Heart right ventricle (tissue), 16 donors: ENCODE measurements at regions of chr11 and their contacts with region 1.

Region 1: DNA sequence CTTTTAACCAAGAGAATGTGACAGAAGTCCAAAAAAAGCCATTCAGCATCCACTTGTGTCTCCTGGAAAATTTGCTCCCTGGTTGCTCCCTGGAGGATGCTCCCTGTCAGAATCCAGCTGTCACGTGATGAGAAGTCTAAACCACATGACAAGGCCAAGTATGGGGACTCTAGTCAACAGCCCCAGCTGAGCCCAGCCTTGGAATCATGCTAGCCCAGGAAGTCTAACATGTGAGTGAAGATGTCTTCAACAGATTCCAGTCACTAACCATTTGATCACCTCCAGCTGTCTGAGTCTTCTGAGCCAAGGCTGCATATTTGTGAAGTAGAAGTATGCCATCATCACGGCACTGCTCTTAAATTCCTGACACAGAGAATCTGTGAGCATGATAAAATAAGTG is 4.2 kb downstream of the OR56B4 start:
- DNase-seq: peak in 1 of 2 donors; percentile 33
- ATAC-seq: peak in 2 of 8 donors; percentile 16 to 49
- H3K4me3 ChIP-seq: no peak overlapping the region
- H3K27ac ChIP-seq: no peak overlapping the region
- H3K4me1 ChIP-seq: peaks cover 0 to 4% (median 0%) of the 10 kb centered on the region in 9 donors
- H3K27me3 ChIP-seq: no peaks in the 10 kb centered on the region
- CTCF ChIP-seq: no peak

Region 2: DNA sequence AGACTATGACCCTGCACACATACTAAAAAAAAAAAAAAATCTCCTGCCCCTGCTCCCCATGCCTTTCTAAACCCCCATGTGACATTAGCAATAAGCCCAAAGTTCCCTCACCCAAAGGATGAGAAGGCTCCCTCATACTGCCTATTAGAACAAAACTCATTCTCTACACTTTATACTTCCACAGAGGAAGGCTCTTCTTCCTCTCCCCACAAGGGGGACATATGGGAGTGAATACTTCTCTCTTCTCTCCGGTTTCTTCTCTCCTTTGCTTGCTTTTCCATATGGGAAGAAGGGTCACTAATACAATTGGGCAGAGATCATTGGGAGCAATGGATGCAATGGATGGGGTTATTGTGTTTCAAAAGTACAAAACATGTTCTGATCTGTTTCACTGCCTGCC is 128.2 kb before region 1 on chr11:
- intact Hi-C with region 1: no loop called
- DNase-seq: no peak
- ATAC-seq: no peak
- H3K4me3 ChIP-seq: no peak overlapping the region
- H3K27ac ChIP-seq: no peak overlapping the region
- H3K4me1 ChIP-seq: no peaks in the 10 kb centered on the region
- H3K27me3 ChIP-seq: peaks cover 0 to 3% (median 0%) of the 10 kb centered on the region in 7 donors
- CTCF ChIP-seq: no peak

Region 3: DNA sequence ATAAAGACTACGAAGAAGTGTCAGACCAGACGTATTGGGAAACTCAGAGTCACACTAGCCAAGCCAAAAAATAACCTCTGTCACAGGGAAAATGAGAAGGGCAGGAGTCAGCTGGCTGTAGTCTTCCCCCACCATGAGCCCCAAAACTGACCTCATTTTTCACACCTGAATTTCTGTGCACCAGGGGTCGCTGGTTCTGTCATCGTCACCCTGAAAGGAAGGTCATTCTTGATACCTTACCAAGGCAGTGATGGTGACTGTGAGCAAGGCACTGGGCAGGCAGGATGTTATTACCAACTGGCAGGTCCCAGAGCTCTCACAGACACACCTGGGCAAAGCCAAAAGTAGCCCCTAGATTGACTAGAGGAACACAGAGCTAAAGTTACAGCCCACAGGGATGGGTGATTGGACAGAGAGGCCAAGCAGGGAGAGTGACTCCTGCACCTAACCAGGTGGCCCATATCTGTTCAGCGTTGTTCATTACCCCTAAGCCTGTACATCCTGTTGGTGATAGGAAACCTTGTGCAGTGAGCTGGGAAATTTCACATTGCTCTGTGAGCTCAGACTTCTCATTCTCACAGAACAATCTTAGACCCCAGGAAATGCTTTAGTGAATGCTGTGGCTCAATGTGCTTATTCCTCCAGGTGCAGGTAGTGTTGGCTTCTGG is 48.8 kb before region 1 on chr11:
- intact Hi-C with region 1: loop called in 1 of 10 experiments (anchors 2 kb)
- DNase-seq: no peak
- ATAC-seq: no peak
- H3K4me3 ChIP-seq: no peak overlapping the region
- H3K27ac ChIP-seq: no peak overlapping the region
- H3K4me1 ChIP-seq: no peaks in the 10 kb centered on the region
- H3K27me3 ChIP-seq: peaks cover 0 to 5% (median 0%) of the 10 kb centered on the region in 7 donors
- CTCF ChIP-seq: no peak

Region 4: DNA sequence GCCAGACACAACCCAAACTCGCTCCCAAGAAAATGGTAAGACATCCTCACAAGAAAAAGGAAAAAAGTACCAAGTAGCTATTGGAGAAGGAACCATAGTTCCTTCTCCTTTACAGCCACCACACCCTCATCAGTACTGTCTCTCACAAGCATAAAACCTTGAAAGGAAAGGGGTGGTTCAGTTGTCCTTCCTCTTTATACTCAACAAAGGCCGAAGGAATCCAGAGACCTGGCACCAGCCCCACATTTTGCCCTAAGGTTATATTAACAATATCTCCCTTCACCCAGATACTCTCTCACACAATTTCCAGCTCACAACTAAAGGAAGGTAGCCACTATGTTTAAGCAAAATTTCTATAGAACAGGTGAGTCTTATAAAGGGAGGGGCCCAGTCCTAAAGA is 114.2 kb after region 1 on chr11:
- intact Hi-C with region 1: no loop called
- DNase-seq: peak in 1 of 2 donors; percentile 17
- ATAC-seq: peak in 5 of 8 donors; percentile 35 to 79 (median 64)
- H3K4me3 ChIP-seq: no peak overlapping the region
- H3K27ac ChIP-seq: peak overlapping the region in 7 of 10 donors; percentile 8 to 40 (median 33)
- H3K4me1 ChIP-seq: peaks cover 0 to 48% (median 24%) of the 10 kb centered on the region in 9 donors
- H3K27me3 ChIP-seq: no peaks in the 10 kb centered on the region
- CTCF ChIP-seq: no peak

Region 5: GRCh38 chr11:6238902-6239301 is 127.2 kb after region 1 on chr11 and contains the start of gene CNGA4:
- intact Hi-C with region 1: no loop called
- DNase-seq: no peak
- ATAC-seq: no peak
- H3K4me3 ChIP-seq: no peak within 1 kb of the TSS
- H3K27ac ChIP-seq: no peak within 1 kb of the TSS
- H3K4me1 ChIP-seq: peaks cover 0 to 21% (median 4%) of the 10 kb centered on the region in 9 donors
- H3K27me3 ChIP-seq: no peaks in the 10 kb centered on the region
- CTCF ChIP-seq: no peak
- total RNA-seq, gene CNGA4: 0.13 TPM in 1 of 10 donors, not detected in the others

Region 6: DNA sequence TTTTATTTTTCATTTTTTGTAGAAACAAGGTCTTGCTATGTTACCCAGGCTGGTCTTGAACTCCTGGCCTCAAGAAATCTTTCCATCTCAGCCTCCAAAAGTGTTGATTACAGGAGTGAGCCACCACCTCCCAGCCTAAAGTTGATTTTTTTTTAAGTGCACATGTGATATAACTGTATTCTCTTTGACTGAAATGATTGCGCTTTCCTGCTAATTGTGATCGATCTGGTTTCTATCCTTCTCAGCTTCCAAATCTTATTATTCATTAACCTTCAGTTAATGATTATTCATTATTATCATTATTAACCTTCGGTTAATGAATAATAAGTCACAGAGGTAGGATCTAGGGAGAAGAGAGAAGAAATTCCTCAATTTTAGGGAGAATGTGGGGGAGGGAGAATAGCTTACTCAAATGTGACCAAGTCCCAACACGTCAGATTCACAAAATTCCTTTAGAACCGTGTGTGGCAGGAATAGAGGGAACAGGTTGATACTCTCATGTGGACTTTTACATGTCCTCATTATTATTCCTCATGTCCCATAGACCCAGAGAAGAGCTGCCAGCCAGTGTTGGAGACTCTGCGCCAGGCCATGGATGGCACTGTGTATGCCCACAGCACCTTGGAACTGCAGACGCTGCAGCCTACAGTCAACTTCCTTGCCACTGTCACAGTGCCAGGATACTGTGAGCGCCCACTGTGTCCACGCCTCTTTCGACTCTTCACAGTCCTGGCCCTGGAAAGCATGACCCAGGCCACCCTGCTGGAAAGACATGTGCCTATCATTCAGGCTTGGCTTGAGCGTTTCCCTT is 444.7 kb after region 1 on chr11:
- intact Hi-C with region 1: no loop called
- DNase-seq: no peak
- ATAC-seq: peak in 3 of 8 donors; percentile 10 to 21 (median 20)
- H3K4me3 ChIP-seq: no peak overlapping the region
- H3K27ac ChIP-seq: no peak overlapping the region
- H3K4me1 ChIP-seq: peaks cover 0 to 10% (median 0%) of the 10 kb centered on the region in 9 donors
- H3K27me3 ChIP-seq: no peaks in the 10 kb centered on the region
- CTCF ChIP-seq: no peak